ENCODE measurements at regions of chr18 and their contacts with region 1.

Region 1: GRCh38 chr18:8988261-8988871 is 114.1 kb upstream of the NDUFV2 start:
- DNase-seq: peak in 4 of 5 donors; percentile 65 to 80 (median 69)
- H3K4me3 ChIP-seq: no peak overlapping the region
- H3K27ac ChIP-seq: no peak overlapping the region
- H3K4me1 ChIP-seq: no peaks in the 10 kb centered on the region
- H3K27me3 ChIP-seq: no peaks in the 10 kb centered on the region
- CTCF ChIP-seq: peak; percentile 87

Region 2: GRCh38 chr18:8654503-8655451 is 333.6 kb before region 1 on chr18:
- intact Hi-C with region 1: loop called (anchors 10 kb)
- DNase-seq: peak in 2 of 5 donors; percentile 30 to 35
- H3K4me3 ChIP-seq: no peak overlapping the region
- H3K27ac ChIP-seq: no peak overlapping the region
- H3K4me1 ChIP-seq: no peaks in the 10 kb centered on the region
- H3K27me3 ChIP-seq: no peaks in the 10 kb centered on the region
- CTCF ChIP-seq: peak; percentile 74